GM23248 (cell line): ENCODE measurements at regions of chr3 and their contacts with region 1.

Region 1: DNA sequence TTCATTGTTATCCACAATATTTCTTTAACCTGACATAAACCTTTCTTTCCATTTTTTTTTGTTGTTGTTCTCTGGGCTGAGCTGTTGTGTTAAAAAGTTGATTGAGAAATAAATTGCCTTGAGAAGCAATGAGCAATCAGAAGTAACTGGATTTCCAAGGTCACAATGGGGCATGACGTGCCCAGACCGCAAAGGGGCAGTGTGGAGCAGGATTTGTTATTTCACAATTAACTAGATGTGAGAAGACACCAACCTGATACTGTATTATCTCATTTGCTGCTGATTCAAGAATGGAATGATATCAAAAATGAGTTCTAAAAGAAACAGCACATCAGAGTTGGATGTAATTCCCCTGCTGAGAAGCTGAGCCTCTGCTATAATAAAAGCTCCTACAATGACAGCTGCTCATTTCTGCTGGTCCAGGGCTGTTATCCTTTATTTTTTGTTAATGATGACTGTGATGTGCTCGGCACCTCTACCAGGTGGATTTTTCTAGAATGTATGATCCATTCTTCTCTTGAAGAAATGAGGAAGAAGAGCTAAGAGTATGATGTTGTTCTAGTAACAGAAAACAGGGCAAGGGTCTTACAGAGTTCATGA is 28.1 kb downstream of the CPNE4 start:
- DNase-seq: peak; percentile 71
- H3K4me3 ChIP-seq: no peak overlapping the region
- H3K27ac ChIP-seq: no peak overlapping the region
- H3K4me1 ChIP-seq: 0 out of 2 replicates have a peak, but pooled peaks cover 8% of the 10 kb centered on the region
- H3K27me3 ChIP-seq: no peaks in the 10 kb centered on the region; the same call in 1 of the 2 replicates

Region 2: GRCh38 chr3:131526801-131527347 is 479.8 kb before region 1 on chr3:
- in situ Hi-C with region 1: loop called (anchors 25 kb)
- DNase-seq: peak; percentile 76
- H3K4me3 ChIP-seq: peak overlapping the region; percentile 71
- H3K27ac ChIP-seq: no peak overlapping the region
- H3K4me1 ChIP-seq: peaks cover 3% of the 10 kb centered on the region; the same call in 1 of the 2 replicates
- H3K27me3 ChIP-seq: no peaks in the 10 kb centered on the region

Region 3: GRCh38 chr3:131868203-131868602 is 138.5 kb before region 1 on chr3:
- in situ Hi-C with region 1: no loop called
- DNase-seq: no peak
- H3K4me3 ChIP-seq: no peak overlapping the region
- H3K27ac ChIP-seq: no peak overlapping the region
- H3K4me1 ChIP-seq: no peaks in the 10 kb centered on the region
- H3K27me3 ChIP-seq: no peaks in the 10 kb centered on the region